GM18951 (cell line): ENCODE measurements at regions of chr12 and their contacts with region 1.

Region 1: DNA sequence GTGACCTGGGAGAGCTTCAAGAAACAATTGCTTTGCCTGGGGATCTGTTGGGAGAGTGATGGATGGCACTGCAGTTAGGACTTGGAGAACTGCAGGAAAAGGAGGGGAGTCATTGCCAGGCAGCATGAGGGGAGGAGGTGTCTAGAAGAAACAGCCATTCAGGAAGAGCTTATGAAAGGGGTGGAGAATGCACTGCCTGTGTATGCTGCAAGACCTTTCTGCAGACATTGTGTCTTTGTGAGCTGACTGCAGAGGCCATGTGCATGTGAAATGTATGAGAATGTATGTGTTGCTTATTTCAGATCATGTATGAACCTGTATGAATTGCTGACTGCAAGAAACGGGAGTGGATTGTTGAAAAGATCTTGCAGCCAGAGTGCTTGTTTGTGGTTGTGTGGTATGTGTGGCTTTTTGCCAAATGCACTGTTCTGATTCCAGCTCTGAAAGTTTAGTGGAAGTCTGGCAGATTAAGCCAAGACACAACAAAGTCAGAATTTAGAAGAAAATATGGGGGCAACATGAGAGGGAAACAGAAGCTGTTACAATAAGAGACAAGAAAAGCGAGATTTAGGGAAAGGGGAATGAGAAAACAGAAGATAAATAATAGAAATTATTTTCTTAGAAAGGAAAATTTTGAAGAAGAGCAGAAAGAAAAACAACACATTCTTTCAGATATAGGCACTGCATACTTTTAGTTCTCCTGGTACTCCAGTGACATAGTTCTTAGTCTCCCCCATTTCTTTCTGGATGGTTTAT is 9.8 kb upstream of the RIMKLB start:
- POLR2A ChIP-seq: no peak

Region 2: GRCh38 chr12:9049520-9050133 is 361.6 kb after region 1 on chr12:
- in situ Hi-C with region 1: loop called (anchors 10 kb)
- POLR2A ChIP-seq: no peak